Tibial artery (tissue), 4 donors: ENCODE measurements at regions of chr2 and their contacts with region 1.

Region 1: GRCh38 chr2:26033818-26034636 is at the start of gene RAB10:
- DNase-seq: peak; percentile 98 to 100
- H3K4me3 ChIP-seq: peak within 1 kb of the TSS; percentile 93 to 94
- H3K27ac ChIP-seq: peak within 1 kb of the TSS; percentile 93 to 97
- H3K4me1 ChIP-seq: peaks cover 0 to 40% (median 27%) of the 10 kb centered on the region in 4 donors
- H3K27me3 ChIP-seq: no peaks in the 10 kb centered on the region
- CTCF ChIP-seq: peak in 1 of 2 experiments; percentile 30

Region 2: DNA sequence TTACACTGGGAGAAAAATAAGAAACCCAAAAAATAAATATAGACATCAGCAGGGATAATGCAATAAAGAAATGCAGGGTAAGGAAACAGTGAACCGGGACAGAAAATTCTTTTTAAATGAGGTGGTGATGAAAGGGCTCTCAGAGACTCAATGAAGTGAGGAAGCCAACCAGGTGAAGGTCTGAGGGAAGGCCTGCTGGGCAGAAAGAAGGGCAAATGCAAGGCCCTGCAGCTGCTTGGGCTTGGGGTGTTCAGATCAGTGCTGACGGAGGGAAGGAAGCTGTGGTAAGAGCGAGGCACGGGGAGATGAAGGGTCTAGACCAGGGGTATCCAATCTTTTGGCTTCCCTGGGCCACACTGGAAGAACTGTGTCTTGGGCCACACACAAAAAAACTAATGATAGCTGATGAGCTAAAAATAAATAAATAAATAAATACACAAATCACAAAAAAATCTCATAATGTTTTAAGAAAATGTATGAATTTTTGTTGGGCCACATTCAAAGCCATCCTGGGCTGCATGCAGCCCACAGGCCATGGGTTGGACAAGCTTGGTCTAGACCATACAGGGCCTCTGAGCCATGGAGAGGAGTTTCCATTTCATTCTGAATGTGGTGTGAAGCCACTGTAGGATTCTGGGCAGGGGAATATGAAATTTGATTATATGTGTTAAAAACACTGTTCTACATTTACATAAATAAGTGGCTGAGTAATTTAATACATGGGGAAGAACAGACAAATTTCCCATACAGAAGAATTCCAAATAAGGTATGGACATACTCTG is 596.0 kb before region 1 on chr2:
- intact Hi-C with region 1: no loop called
- DNase-seq: no peak
- H3K4me3 ChIP-seq: no peak overlapping the region
- H3K27ac ChIP-seq: no peak overlapping the region
- H3K4me1 ChIP-seq: no peaks in the 10 kb centered on the region
- H3K27me3 ChIP-seq: no peaks in the 10 kb centered on the region
- CTCF ChIP-seq: no peak

Region 3: DNA sequence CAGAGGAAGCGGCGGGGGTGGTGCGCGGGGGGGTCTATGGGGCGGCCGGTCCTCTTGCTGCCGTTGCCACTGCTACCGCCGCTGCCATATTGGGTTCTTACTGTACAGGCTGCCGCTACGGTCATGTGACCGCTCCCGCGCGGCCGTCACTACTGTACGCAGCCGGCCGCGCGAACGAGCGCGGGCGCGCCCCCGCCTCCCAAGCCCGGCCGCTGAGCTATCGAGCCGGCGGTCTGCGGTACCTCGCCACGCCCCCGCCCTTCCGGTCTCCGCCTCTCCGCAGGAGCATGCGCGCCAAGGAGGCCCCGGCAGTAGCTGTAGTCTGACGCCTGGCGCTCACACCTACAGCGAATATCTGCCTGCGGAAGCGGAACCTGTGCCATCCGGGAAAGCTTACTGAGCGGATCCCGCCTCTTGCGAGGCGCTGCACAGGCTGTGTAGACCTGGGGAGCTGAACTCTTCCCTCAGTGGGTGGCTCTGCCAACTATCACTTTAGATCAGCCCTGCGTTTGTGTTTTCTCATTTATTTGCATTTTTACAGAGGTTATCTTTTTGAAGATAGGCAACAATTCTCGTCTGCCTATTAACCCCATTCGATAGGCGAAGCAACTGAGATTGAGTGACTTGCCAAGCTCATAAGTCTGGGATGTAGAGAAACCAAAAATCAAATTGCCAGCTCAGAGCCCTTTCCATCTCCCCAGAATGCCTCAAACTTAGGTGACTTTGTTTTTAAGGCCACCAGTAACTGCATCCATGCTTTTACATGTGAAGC is 155.5 kb before region 1 on chr2 and contains the start of gene ASXL2:
- intact Hi-C with region 1: loop called (anchors 5 kb)
- DNase-seq: peak; percentile 96 to 97
- H3K4me3 ChIP-seq: peak within 1 kb of the TSS; percentile 80 to 89
- H3K27ac ChIP-seq: peak within 1 kb of the TSS; percentile 88 to 94
- H3K4me1 ChIP-seq: peaks cover 0 to 21% (median 7%) of the 10 kb centered on the region in 4 donors
- H3K27me3 ChIP-seq: peaks cover 0 to 3% of the 10 kb centered on the region in 2 donors
- CTCF ChIP-seq: no peak

Region 4: GRCh38 chr2:25991965-25992364 is 42.1 kb before region 1 on chr2:
- intact Hi-C with region 1: loop called (anchors 5 kb)
- DNase-seq: no peak
- H3K4me3 ChIP-seq: no peak overlapping the region
- H3K27ac ChIP-seq: no peak overlapping the region
- H3K4me1 ChIP-seq: peaks cover 0 to 5% (median 2%) of the 10 kb centered on the region in 4 donors
- H3K27me3 ChIP-seq: no peaks in the 10 kb centered on the region
- CTCF ChIP-seq: no peak

Region 5: GRCh38 chr2:26477911-26478253 is 443.9 kb after region 1 on chr2 and contains the start of gene OTOF:
- intact Hi-C with region 1: no loop called
- DNase-seq: peak in 1 of 2 donors; percentile 40
- H3K4me3 ChIP-seq: no peak within 1 kb of the TSS
- H3K27ac ChIP-seq: no peak within 1 kb of the TSS
- H3K4me1 ChIP-seq: peaks cover 0 to 4% (median 0%) of the 10 kb centered on the region in 4 donors
- H3K27me3 ChIP-seq: no peaks in the 10 kb centered on the region
- CTCF ChIP-seq: no peak

Region 6: GRCh38 chr2:26704441-26704977 is 670.5 kb after region 1 on chr2:
- intact Hi-C with region 1: no loop called
- DNase-seq: peak in 1 of 2 donors; percentile 74
- H3K4me3 ChIP-seq: no peak overlapping the region
- H3K27ac ChIP-seq: peak overlapping the region; percentile 72 to 78
- H3K4me1 ChIP-seq: peaks cover 0 to 68% (median 39%) of the 10 kb centered on the region in 4 donors
- H3K27me3 ChIP-seq: no peaks in the 10 kb centered on the region
- CTCF ChIP-seq: no peak